ENCODE measurements at regions of chr14 and their contacts with region 1.

Region 1: DNA sequence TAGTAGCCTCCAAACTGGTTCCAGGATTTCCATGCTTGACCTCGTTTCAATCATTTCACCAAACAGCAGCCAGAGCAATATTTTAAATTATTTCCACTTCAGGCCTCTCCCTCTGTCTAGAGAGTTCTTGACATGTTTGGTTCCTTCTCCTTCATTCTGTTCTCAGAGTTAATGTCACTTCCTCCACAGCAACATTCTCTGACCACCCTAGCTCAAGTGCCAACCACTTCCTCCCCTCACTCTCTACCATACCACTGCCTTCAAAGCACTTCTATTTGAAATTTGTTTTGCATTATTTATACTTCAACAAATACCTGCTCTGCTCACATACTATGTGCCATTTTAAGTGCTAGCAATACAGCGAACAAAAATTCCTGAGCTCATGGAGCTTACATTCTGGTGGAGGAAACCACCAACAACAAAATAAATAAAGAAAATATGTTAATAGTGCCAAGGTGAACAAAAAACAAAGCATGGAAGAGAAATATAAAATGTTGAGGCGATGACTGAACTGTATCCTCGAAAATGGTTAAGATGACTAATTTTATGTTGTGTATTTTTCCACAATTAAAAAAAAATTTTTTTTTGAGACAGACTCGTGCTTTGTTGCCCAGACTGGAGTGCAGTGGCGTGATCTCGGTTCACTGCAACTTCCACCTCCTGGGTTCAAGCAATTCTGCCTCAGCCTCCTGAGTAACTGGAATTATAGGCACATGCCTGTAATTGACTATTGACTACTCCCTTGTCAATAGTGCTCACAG is 17.3 kb downstream of the BAZ1A start:
- DNase-seq: no peak
- ATAC-seq: peak; percentile 69
- H3K4me3 Mint-ChIP-seq: no peak overlapping the region
- H3K27ac Mint-ChIP-seq: peak overlapping the region; percentile 74
- H3K4me1 Mint-ChIP-seq: peaks cover 29% of the 10 kb centered on the region
- H3K27me3 Mint-ChIP-seq: no peaks in the 10 kb centered on the region

Region 2: DNA sequence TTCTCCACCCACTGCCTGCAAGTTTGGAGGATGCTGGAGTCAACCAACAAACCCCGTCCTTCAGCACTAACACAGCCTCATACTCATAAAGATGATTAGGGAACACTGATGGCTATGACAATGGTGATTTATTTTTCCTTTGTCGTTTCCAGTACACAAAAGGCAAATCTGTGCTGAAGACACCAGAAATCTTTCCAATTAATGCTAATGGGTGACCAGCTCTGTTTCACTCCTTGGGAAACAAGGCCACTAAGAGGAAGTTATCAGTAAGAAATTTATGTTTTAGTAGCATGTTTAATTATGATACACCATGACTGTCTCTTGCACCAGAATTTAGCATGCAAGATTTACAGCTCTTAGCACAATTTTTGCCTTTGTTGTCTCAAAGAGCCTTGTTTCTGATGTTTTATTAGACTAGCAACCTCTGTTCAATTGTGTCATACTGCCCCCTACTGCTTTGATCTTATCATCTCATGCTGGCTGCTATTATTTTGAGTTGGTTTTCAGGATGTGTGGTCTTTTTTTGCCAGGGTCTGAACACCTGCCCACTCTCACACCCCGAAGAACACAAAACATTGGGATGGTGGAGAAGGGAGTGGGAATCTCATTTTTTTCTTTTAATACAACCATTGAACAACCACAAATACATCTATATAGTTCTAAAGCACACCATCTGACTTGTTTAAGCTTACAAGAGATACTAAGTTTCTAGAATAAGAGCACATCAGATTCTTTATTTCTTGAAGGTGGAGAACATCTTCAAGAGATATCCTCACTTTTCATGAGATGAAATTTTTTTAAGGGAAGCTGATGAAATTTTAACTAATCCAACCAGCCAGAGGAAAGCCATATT is 556.8 kb before region 1 on chr14:
- CTCF ChIA-PET with region 1: no interaction called
- POLR2A ChIA-PET with region 1: no interaction called
- intact Hi-C with region 1: no loop called
- DNase-seq: peak; percentile 8
- ATAC-seq: peak; percentile 30
- H3K4me3 Mint-ChIP-seq: no peak overlapping the region
- H3K27ac Mint-ChIP-seq: no peak overlapping the region
- H3K4me1 Mint-ChIP-seq: no peaks in the 10 kb centered on the region
- H3K27me3 Mint-ChIP-seq: no peaks in the 10 kb centered on the region

Region 3: DNA sequence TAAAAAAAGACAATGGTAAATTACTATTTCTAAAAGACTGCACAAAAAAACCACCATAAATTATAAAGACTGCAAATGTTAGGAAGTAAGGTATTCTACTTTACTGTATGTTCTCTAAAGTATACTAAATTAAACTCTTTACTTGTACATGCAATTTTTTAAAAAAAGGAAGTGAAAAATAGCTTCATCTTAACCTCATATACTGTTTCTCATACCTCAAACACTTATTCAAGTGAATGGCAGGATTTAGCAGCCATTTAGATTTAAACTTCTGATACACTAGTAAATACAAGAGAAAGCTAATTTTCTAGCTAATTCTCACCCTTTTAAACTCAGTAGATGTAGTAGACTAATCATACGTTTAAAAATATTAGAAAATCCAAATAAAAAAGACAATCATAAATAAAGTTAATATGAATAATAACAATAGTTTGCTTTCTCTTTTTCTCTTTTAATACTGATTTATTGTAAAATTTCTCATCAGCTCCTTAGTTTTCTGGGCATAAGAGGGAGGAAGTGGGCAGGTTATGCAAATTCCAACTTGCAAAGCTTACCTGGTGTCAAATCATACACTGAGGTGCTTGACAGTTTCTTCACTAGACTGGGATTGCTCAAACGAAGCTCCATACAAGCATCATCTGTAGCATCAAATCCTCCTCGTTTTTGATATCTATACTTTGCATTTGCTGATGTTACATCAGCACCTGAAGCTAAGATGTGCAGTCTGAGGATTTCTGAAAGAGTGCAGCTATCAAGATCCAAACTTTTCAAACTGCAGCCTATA is 72.5 kb before region 1 on chr14:
- CTCF ChIA-PET with region 1: no interaction called
- POLR2A ChIA-PET with region 1: no interaction called
- intact Hi-C with region 1: no loop called
- DNase-seq: no peak
- ATAC-seq: no peak
- H3K4me3 Mint-ChIP-seq: no peak overlapping the region
- H3K27ac Mint-ChIP-seq: no peak overlapping the region
- H3K4me1 Mint-ChIP-seq: peaks cover 2% of the 10 kb centered on the region
- H3K27me3 Mint-ChIP-seq: no peaks in the 10 kb centered on the region

Region 4: DNA sequence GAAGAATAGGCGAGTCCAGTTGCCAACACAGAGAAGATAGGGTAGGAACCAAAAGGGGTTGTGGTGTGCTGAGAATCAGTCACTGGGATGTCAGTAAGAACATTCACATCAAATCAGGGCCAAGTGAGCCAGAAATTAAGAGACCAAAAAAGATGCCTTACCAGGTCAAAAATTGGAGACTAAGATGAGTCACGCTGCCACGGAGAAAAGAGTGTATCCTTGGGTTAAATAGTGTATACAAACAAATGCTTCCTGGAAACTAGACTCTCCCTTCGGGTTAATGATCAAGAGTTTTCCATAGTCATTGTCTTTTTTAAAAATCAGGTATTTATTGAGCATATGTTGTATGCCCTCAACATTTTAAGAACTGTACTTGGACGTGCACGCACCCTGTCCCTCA is 62.5 kb after region 1 on chr14:
- CTCF ChIA-PET with region 1: no interaction called
- POLR2A ChIA-PET with region 1: interaction called, 14 read pairs
- intact Hi-C with region 1: no loop called
- DNase-seq: no peak
- ATAC-seq: no peak
- H3K4me3 Mint-ChIP-seq: no peak overlapping the region
- H3K27ac Mint-ChIP-seq: no peak overlapping the region
- H3K4me1 Mint-ChIP-seq: no peaks in the 10 kb centered on the region
- H3K27me3 Mint-ChIP-seq: no peaks in the 10 kb centered on the region

Measured in activated CD4-positive, alpha-beta T cell treated with anti-CD3 and anti-CD28 coated beads for 36 hours (primary cell).